Naive thymus-derived CD4-positive, alpha-beta T cell (primary cell): ENCODE measurements at regions of chr14 and their contacts with region 1.

Region 1: DNA sequence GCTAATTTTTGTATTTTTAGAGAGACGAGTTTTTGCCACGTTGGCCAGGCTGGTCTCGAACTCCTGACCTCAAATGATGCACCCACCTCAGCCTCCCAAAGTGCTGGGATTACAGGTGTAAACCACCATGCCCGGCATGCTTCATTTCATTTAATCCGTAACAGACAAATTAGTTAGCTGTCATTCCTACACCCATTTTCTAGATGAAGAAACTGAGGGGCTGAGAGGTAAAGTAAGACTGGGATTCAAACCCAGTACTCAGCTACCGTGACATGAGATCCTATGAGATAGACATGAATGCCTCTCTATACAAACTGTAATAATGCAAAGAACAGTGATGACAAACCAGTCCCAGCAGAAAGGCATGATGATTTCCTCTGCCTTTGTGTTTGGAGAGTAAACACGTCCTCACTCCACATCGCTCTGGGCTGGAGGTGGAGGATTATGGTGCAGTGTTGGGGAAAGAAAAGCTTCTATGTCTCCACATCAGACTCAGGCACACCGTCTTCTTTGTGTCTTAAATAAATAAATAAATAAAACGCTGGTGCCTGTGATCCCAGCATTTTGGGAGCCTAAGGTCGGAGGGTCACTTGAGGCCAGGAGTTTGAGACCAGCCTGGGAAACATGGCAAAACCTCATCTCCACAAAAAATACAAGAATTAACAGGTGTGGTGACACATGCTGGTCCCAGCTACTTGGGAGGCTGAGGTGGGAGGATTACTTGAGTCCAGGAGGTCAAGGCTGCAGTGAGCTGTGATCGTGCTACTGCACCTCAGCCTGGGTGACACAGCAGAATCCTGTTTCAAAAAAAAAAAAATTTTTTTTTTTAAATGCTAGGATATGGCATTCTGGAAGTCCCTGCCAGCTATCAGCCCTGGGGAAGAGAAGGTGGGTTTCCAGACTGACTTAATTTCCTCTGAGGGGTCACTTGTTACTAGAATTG is 10.5 kb downstream of the VSX2 start:
- DNase-seq: no peak
- ATAC-seq: no peak
- H3K4me3 ChIP-seq: no peak overlapping the region
- H3K4me3 Mint-ChIP-seq: no peak overlapping the region
- H3K27ac ChIP-seq: no peak overlapping the region
- H3K27ac Mint-ChIP-seq: no peak overlapping the region
- H3K4me1 ChIP-seq: no peaks in the 10 kb centered on the region
- H3K4me1 Mint-ChIP-seq: peaks cover 6% of the 10 kb centered on the region in 7 donors
- H3K27me3 ChIP-seq: no peaks in the 10 kb centered on the region
- H3K27me3 Mint-ChIP-seq: peaks cover 29 to 62% (median 38%) of the 10 kb centered on the region in 5 donors

Region 2: GRCh38 chr14:74109369-74109768 is 140.3 kb before region 1 on chr14:
- CTCF ChIA-PET with region 1: interaction called, 6 read pairs
- POLR2A ChIA-PET with region 1: no interaction called
- intact Hi-C with region 1: loop called (anchors 1 kb)
- DNase-seq: no peak
- ATAC-seq: no peak
- H3K4me3 ChIP-seq: no peak overlapping the region
- H3K4me3 Mint-ChIP-seq: no peak overlapping the region
- H3K27ac ChIP-seq: no peak overlapping the region
- H3K27ac Mint-ChIP-seq: no peak overlapping the region
- H3K4me1 ChIP-seq: no peaks in the 10 kb centered on the region
- H3K4me1 Mint-ChIP-seq: peaks cover 0 to 2% (median 0%) of the 10 kb centered on the region in 7 donors
- H3K27me3 ChIP-seq: no peaks in the 10 kb centered on the region
- H3K27me3 Mint-ChIP-seq: no peaks in the 10 kb centered on the region

Region 3: GRCh38 chr14:74217672-74218448 is 31.8 kb before region 1 on chr14:
- CTCF ChIA-PET with region 1: interaction called, 12 read pairs
- POLR2A ChIA-PET with region 1: no interaction called
- intact Hi-C with region 1: loop called (anchors 1 to 2 kb)
- DNase-seq: peak; percentile 41 to 78 (median 59)
- ATAC-seq: peak; percentile 91
- H3K4me3 ChIP-seq: peak overlapping the region; percentile 36
- H3K4me3 Mint-ChIP-seq: peak overlapping the region in 8 of 10 donors; percentile 12 to 64 (median 54)
- H3K27ac ChIP-seq: no peak overlapping the region
- H3K27ac Mint-ChIP-seq: peak overlapping the region in 1 of 9 donors; percentile 36
- H3K4me1 ChIP-seq: peaks cover 0 to 6% of the 10 kb centered on the region in 2 donors
- H3K4me1 Mint-ChIP-seq: peaks cover 0 to 5% (median 0%) of the 10 kb centered on the region in 7 donors
- H3K27me3 ChIP-seq: no peaks in the 10 kb centered on the region
- H3K27me3 Mint-ChIP-seq: peaks cover 7 to 26% (median 13%) of the 10 kb centered on the region in 5 donors

Region 4: GRCh38 chr14:74392616-74393570 is 143.2 kb after region 1 on chr14:
- CTCF ChIA-PET with region 1: no interaction called
- POLR2A ChIA-PET with region 1: no interaction called
- intact Hi-C with region 1: no loop called
- DNase-seq: no peak
- ATAC-seq: no peak
- H3K4me3 ChIP-seq: no peak overlapping the region
- H3K4me3 Mint-ChIP-seq: no peak overlapping the region
- H3K27ac ChIP-seq: no peak overlapping the region
- H3K27ac Mint-ChIP-seq: no peak overlapping the region
- H3K4me1 ChIP-seq: no peaks in the 10 kb centered on the region
- H3K4me1 Mint-ChIP-seq: peaks cover 0 to 1% (median 0%) of the 10 kb centered on the region in 7 donors
- H3K27me3 ChIP-seq: no peaks in the 10 kb centered on the region
- H3K27me3 Mint-ChIP-seq: peaks cover 3 to 23% (median 19%) of the 10 kb centered on the region in 5 donors